T-cell (primary cell): ENCODE measurements at regions of chr7 and their contacts with region 1.

Region 1: GRCh38 chr7:113216038-113216437 is 97.7 kb upstream of the SMIM30 start:
- DNase-seq: no peak
- ATAC-seq: no peak
- H3K4me3 ChIP-seq: no peak overlapping the region
- H3K4me3 Mint-ChIP-seq: no peak overlapping the region
- H3K27ac ChIP-seq: no peak overlapping the region
- H3K27ac Mint-ChIP-seq: no peak overlapping the region
- H3K4me1 ChIP-seq: no peaks in the 10 kb centered on the region
- H3K4me1 Mint-ChIP-seq: no peaks in the 10 kb centered on the region
- H3K27me3 ChIP-seq: no peaks in the 10 kb centered on the region
- H3K27me3 Mint-ChIP-seq: peaks cover 0 to under 1% of the 10 kb centered on the region in 2 donors

Region 2: GRCh38 chr7:113487925-113488731 is 272.1 kb after region 1 on chr7:
- CTCF ChIA-PET with region 1: interaction called in 1 of 2 experiments, 10 read pairs
- POLR2A ChIA-PET with region 1: no interaction called
- DNase-seq: no peak
- ATAC-seq: no peak
- H3K4me3 ChIP-seq: no peak overlapping the region
- H3K4me3 Mint-ChIP-seq: no peak overlapping the region
- H3K27ac ChIP-seq: no peak overlapping the region
- H3K27ac Mint-ChIP-seq: no peak overlapping the region
- H3K4me1 ChIP-seq: no peaks in the 10 kb centered on the region
- H3K4me1 Mint-ChIP-seq: no peaks in the 10 kb centered on the region
- H3K27me3 ChIP-seq: no peaks in the 10 kb centered on the region
- H3K27me3 Mint-ChIP-seq: no peaks in the 10 kb centered on the region

Region 3: DNA sequence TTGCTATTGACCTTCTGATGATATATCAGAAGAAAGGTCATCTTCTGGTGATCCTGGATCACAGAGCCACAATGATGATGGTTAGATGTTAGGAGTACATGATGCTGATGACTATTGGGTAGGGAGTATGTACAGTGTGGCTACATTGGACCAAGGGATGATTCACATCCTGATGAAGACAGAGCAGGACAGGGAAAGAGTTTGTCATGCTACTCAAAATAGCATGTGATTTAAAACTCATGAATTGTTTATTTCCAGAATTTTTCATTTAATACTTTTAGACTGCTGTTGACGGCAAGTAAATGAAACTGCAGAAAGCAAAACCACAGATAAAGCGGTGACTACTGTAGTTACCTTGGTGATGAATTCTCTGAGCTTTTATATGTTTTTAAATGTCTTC is 305.4 kb after region 1 on chr7:
- CTCF ChIA-PET with region 1: no interaction called
- POLR2A ChIA-PET with region 1: no interaction called
- DNase-seq: no peak
- ATAC-seq: no peak
- H3K4me3 ChIP-seq: no peak overlapping the region
- H3K4me3 Mint-ChIP-seq: no peak overlapping the region
- H3K27ac ChIP-seq: no peak overlapping the region
- H3K27ac Mint-ChIP-seq: no peak overlapping the region
- H3K4me1 ChIP-seq: no peaks in the 10 kb centered on the region
- H3K4me1 Mint-ChIP-seq: no peaks in the 10 kb centered on the region
- H3K27me3 ChIP-seq: no peaks in the 10 kb centered on the region
- H3K27me3 Mint-ChIP-seq: no peaks in the 10 kb centered on the region